Naive thymus-derived CD8-positive, alpha-beta T cell (primary cell): ENCODE measurements at regions of chr1 and their contacts with region 1.

Region 1: DNA sequence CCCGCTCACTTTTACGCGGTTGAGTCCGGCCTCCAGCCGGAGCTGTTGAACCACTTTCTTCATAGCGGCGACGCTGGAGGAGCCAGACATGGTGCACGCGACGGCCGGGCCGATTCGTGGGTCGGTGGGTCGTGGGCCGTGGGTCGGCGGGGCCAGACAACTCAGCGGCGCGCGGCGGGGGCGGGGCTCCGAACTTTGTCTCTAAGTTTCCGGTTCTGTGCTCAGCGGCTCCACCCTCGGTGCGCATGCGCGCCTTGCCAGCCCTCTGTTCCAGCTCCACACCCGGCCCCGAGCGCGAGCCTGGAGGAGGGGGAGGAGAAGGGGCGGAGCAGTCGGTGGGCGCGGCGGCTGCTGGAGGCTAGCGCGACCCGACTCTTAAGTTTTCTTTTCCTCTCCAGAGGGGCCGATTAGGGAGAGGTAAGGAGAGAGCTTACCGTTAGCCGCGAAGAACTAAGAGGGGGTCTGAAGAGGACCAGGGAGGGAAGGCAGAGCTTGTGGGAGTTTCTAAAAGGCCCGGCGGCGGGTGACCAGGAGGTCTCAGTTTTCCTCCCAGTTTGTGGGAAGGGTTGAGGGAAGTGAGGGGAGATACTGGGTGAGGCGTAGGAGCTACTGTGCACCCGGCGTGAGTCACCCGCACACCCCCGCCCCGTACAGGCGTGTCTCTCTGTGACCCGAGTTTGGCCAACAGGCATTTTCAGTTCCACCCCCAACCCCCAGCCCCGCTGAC is at the starts of genes GNG5 and SPATA1:
- DNase-seq: peak; percentile 92 to 98 (median 96)
- ATAC-seq: peak; percentile 89
- H3K4me3 Mint-ChIP-seq: peak within 1 kb of the TSS; percentile 87 to 100 (median 98)
- H3K27ac Mint-ChIP-seq: peak within 1 kb of the TSS; percentile 93 to 99 (median 97)
- H3K4me1 Mint-ChIP-seq: peaks cover 19 to 56% (median 40%) of the 10 kb centered on the region in 4 donors
- H3K27me3 Mint-ChIP-seq: no peaks in the 10 kb centered on the region
- polyA plus RNA-seq, gene GNG5: 214 to 259 (median 233) TPM
- polyA plus RNA-seq, gene SPATA1: not detected

Region 2: DNA sequence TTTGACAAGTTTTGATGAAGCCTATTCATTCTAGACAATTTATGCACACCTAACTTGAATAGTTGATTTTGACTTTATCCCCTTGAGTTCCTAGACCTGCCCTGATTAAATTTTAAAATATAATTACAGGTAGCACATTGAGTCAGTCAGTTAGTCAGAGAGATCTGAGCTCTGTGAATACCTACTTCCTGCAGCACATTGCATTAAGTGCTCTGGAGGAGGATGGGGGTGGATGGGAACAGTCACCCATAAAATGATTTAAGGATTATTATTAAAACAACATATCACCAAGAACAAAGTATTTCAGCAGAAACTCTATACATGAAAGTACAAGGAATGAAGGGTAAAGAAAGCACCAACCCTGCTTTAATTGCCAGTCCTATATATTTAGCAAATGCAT is 38.9 kb before region 1 on chr1:
- POLR2A ChIA-PET with region 1: no interaction called
- DNase-seq: no peak
- ATAC-seq: no peak
- H3K4me3 Mint-ChIP-seq: no peak overlapping the region
- H3K27ac Mint-ChIP-seq: no peak overlapping the region
- H3K4me1 Mint-ChIP-seq: no peaks in the 10 kb centered on the region
- H3K27me3 Mint-ChIP-seq: peaks cover 32 to 73% (median 43%) of the 10 kb centered on the region in 5 donors

Region 3: GRCh38 chr1:84478876-84479868 is 27.0 kb before region 1 on chr1 and contains the start of gene RPF1:
- POLR2A ChIA-PET with region 1: interaction called, 29 read pairs
- DNase-seq: peak; percentile 67 to 92 (median 82)
- ATAC-seq: peak; percentile 96 to 97
- H3K4me3 Mint-ChIP-seq: peak within 1 kb of the TSS; percentile 96 to 100 (median 99)
- H3K27ac Mint-ChIP-seq: peak within 1 kb of the TSS; percentile 91 to 100 (median 99)
- H3K4me1 Mint-ChIP-seq: peaks cover 18 to 50% (median 46%) of the 10 kb centered on the region in 4 donors
- H3K27me3 Mint-ChIP-seq: peaks cover 18 to 34% (median 24%) of the 10 kb centered on the region in 5 donors
- polyA plus RNA-seq, gene RPF1: 55.2 to 64.2 (median 58.4) TPM

Region 4: DNA sequence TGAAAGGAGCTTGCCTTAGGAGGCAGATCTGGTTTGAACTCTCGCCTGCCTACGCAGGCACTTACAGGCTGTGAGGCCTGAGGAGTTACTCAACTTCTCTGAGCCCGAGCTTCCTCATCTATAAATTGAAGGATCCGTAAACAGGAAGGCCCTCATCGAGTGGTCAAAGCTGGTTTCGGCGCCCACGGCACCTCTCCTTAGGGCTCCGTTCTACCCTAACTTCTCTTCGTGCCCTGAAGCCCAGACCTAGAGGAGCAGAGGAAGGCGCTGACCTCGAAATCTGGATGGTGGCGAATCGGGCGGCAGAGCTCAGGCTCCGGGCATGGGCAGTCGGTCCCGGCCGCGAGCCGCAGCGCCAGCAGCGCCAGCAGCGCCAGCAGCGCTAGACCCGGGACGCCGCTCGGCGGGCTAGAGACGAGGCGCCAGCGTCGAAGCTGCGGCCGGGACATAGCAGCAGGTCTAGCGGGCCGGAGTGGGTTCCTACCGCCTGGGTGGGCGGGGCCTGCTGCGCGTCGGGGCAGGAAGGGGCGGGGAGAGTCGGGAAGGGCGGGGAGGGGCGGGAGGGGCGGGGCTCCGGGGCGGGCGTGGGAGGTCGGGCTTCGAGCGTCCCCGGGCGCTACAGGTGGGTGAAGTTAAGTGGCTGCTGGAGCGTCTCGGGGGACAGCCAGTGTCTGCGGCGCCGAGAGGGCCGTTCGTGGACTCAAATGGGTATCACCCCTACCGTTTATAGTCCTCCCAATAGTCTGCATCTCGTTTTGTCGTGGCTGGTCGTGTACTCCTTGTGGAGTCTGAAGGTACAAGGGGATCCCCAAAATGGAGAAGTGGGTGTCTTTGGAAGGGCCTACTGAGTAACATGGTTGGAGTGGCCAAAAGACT is 68.0 kb after region 1 on chr1 and contains the start of gene CTBS:
- POLR2A ChIA-PET with region 1: interaction called, 26 read pairs
- DNase-seq: peak; percentile 71 to 92 (median 84)
- ATAC-seq: peak; percentile 89 to 90
- H3K4me3 Mint-ChIP-seq: peak within 1 kb of the TSS; percentile 95 to 99 (median 98)
- H3K27ac Mint-ChIP-seq: peak within 1 kb of the TSS; percentile 98 to 100 (median 100)
- H3K4me1 Mint-ChIP-seq: peaks cover 33 to 50% (median 40%) of the 10 kb centered on the region in 4 donors
- H3K27me3 Mint-ChIP-seq: no peaks in the 10 kb centered on the region
- polyA plus RNA-seq, gene CTBS: 16.3 to 21.1 (median 18.2) TPM

Region 5: DNA sequence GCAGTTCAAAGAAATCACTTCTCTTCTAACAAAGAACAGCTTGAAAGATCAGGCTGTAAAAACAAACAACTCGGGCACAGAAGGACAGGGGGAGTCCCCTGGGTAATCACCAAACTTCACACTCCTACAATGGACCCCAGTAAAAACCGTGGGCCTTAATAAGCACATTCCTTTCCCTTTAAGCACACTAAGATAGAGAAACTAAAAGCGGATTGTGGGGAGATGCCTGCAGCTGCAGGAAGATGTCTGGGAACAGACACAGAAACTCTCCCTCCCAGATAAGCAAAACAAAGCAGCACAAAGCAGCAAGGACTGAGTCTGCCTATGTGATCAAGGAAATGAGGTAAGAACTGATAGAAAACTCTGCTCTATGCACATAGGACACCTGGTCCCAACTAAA is 105.6 kb after region 1 on chr1:
- POLR2A ChIA-PET with region 1: interaction called, 15 read pairs
- DNase-seq: peak in 7 of 10 donors; percentile 12 to 67 (median 45)
- ATAC-seq: peak; percentile 96
- H3K4me3 Mint-ChIP-seq: peak overlapping the region; percentile 49 to 85 (median 66)
- H3K27ac Mint-ChIP-seq: peak overlapping the region; percentile 88 to 97 (median 96)
- H3K4me1 Mint-ChIP-seq: peaks cover 18 to 33% (median 22%) of the 10 kb centered on the region in 4 donors
- H3K27me3 Mint-ChIP-seq: peaks cover 0 to 5% (median 0%) of the 10 kb centered on the region in 5 donors